CD8-positive, alpha-beta T cell (primary cell): ENCODE measurements at regions of chr2 and their contacts with region 1.

Region 1: DNA sequence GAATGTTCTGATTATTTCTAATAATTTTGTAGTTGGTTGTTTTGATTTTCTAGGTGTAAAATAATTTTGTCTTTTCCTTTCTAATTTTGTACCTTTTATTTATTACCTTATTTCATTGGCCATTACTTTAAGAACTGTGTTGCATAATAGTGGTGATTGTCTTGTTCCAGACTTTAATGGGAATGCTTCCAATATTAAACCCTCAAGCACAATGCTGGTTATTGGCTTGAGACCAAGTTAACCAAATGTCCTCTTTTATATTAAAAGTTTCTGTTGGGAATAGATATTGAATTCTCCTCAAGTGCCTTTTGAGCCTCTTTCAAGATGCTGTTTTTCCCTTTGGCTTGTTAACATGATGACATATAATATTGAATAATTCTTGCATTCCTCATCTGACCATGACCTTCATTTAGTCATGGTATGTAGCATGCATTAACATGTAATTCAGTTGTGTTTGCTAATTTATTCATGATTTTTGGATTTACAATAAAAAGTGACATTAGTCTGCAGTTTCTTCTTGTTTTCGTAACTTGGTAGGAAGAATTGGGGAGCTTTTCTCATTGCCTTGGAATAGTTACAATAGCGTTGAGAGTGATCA is 141.7 kb downstream of the DIS3L2 start:
- DNase-seq: no peak
- ATAC-seq: no peak
- H3K4me3 ChIP-seq: no peak overlapping the region
- H3K4me3 Mint-ChIP-seq: no peak overlapping the region
- H3K27ac ChIP-seq: no peak overlapping the region
- H3K27ac Mint-ChIP-seq: no peak overlapping the region
- H3K4me1 ChIP-seq: no peaks in the 10 kb centered on the region
- H3K4me1 Mint-ChIP-seq: no peaks in the 10 kb centered on the region
- H3K27me3 ChIP-seq: no peaks in the 10 kb centered on the region
- H3K27me3 Mint-ChIP-seq: no peaks in the 10 kb centered on the region
- CTCF ChIP-seq: no peak

Region 2: GRCh38 chr2:232026910-232027309 is 76.3 kb before region 1 on chr2:
- CTCF ChIA-PET with region 1: no interaction called
- POLR2A ChIA-PET with region 1: no interaction called
- intact Hi-C with region 1: loop called in 1 of 2 experiments (anchors 5 kb)
- DNase-seq: no peak
- ATAC-seq: no peak
- H3K4me3 ChIP-seq: no peak overlapping the region
- H3K4me3 Mint-ChIP-seq: no peak overlapping the region
- H3K27ac ChIP-seq: no peak overlapping the region
- H3K27ac Mint-ChIP-seq: no peak overlapping the region
- H3K4me1 ChIP-seq: no peaks in the 10 kb centered on the region
- H3K4me1 Mint-ChIP-seq: peaks cover 4% of the 10 kb centered on the region
- H3K27me3 ChIP-seq: no peaks in the 10 kb centered on the region
- H3K27me3 Mint-ChIP-seq: no peaks in the 10 kb centered on the region
- CTCF ChIP-seq: no peak